Activated CD4-positive, alpha-beta memory T cell treated with anti-CD3 and anti-CD28 coated beads for 36 hours (primary cell): ENCODE measurements at regions of chr1 and their contacts with region 1.

Region 1: DNA sequence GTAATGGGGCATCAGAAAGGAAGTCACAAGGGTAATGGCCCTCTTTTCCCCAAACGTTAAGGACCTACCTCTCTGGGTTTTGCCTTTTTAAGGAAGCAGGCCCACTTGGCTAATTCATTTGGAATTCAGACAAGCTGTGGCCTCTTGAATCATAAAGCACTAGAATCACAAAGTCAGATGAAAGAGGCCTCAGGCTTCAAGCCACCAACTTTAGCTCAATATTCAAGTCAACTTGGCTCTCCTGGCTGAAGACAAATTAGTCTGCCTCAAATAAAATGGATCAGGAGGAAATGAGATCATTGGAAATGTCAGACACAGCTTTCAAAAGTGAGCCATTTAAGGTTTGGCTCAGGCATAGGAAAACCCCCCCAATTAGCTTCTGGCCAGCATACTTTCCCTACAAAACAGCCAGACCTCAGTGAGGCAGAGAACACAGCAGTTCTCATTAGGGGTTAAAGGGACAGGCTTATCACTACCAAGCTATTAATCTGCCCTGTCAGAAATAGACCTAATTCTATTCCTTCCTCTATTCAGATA is 34.3 kb downstream of the SLC35D1 start:
- DNase-seq: no peak
- H3K4me3 Mint-ChIP-seq: no peak overlapping the region
- H3K27ac Mint-ChIP-seq: no peak overlapping the region
- H3K4me1 Mint-ChIP-seq: peaks cover 2% of the 10 kb centered on the region
- H3K27me3 Mint-ChIP-seq: no peaks in the 10 kb centered on the region

Region 2: GRCh38 chr1:66996018-66996682 is 23.5 kb before region 1 on chr1:
- CTCF ChIA-PET with region 1: interaction called, 12 read pairs
- POLR2A ChIA-PET with region 1: no interaction called
- intact Hi-C with region 1: no loop called
- DNase-seq: peak; percentile 78
- H3K4me3 Mint-ChIP-seq: no peak overlapping the region
- H3K27ac Mint-ChIP-seq: peak overlapping the region; percentile 25
- H3K4me1 Mint-ChIP-seq: peaks cover 16% of the 10 kb centered on the region
- H3K27me3 Mint-ChIP-seq: no peaks in the 10 kb centered on the region